ENCODE measurements at regions of chr9 and their contacts with region 1.

Region 1: GRCh38 chr9:116860509-116861120 is 173.5 kb downstream of the TRIM32 start:
- DNase-seq: peak; percentile 87
- ATAC-seq: peak; percentile 98
- H3K4me3 Mint-ChIP-seq: no peak overlapping the region
- H3K27ac Mint-ChIP-seq: 0 out of 2 replicates have a peak overlapping the region, but pooled peaks have one; percentile 47
- H3K4me1 Mint-ChIP-seq: peaks cover 16% of the 10 kb centered on the region
- H3K27me3 Mint-ChIP-seq: no peaks in the 10 kb centered on the region
- CTCF ChIP-seq: peak; percentile 78

Region 2: DNA sequence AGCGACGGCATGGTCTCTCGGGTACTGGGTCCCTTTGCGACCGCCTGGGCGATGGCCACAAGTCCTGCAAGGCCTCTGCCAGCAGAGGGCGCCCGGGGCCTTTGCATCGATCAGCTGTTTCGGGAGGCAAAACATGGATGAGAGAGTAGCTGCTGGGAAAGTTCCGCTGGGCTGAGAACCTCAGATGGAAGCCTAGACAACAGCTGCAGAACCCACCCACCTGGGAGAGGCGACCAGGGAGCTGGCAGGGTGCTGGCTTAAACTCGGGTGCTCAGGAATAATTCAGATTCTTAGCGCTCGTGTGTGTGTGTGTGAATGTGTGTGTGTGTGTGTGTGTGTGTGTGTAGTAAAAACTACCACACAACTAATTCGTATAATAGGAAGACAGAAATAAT is 123.5 kb before region 1 on chr9:
- CTCF ChIA-PET with region 1: interaction called, 272 read pairs
- POLR2A ChIA-PET with region 1: interaction called, 4 read pairs
- DNase-seq: peak; percentile 97
- ATAC-seq: peak; percentile 87
- H3K4me3 Mint-ChIP-seq: no peak overlapping the region
- H3K27ac Mint-ChIP-seq: no peak overlapping the region
- H3K4me1 Mint-ChIP-seq: peaks cover 29% of the 10 kb centered on the region
- H3K27me3 Mint-ChIP-seq: no peaks in the 10 kb centered on the region
- CTCF ChIP-seq: peak; percentile 91

Region 3: GRCh38 chr9:116800885-116801284 is 59.7 kb before region 1 on chr9:
- CTCF ChIA-PET with region 1: interaction called, 17 read pairs
- POLR2A ChIA-PET with region 1: no interaction called
- DNase-seq: no peak
- ATAC-seq: peak; percentile 91
- H3K4me3 Mint-ChIP-seq: no peak overlapping the region
- H3K27ac Mint-ChIP-seq: peak overlapping the region; percentile 3; the same call in 1 of the 2 replicates
- H3K4me1 Mint-ChIP-seq: peaks cover 22% of the 10 kb centered on the region
- H3K27me3 Mint-ChIP-seq: no peaks in the 10 kb centered on the region
- CTCF ChIP-seq: no peak

Region 4: DNA sequence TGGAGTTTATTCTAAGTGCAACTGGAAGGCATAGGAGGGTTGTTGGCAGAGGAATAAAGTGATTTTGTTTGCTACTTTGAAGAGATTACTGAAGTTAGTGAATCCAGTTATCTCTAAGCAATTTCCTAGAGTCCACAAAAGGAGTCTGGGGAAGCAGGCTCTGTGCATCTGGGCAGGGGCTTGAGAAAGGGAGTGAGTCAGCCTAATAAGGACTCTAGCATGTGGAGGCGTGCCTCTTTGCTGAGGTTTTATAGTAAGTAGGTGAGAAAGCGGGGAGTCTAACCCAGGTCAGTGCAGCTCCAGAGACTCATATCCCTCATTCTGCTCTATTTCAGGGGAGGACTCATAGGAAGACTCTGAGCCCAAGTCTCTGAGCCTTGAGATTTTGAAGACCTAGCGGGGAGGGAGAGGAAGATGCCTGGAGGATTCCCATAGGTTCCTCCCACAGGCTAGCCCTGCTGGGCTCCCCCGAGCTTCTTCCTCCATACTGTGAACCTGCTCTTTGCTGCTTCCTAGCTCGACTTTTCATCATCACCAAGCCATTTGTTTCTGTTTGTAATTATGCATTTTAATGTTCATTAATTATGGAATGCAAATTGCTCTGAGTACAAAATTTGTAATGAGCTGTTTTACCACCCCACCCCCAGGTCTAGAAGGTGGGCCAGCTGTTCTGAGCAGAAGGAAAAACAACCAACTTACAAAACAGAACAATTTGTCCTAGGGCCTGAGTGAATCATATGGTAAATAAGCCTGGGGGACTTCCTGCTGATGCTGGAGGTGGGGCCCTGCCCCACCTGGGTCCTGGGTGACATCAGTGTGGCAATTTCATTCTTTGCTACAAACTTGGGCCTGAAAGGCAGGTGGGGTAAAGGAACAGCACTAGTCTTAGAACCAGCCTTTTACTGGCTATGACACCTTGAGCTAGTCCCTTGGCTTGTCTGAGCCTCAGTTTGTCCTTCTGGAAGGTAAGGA is 23.3 kb before region 1 on chr9:
- CTCF ChIA-PET with region 1: interaction called, 67 read pairs
- POLR2A ChIA-PET with region 1: no interaction called
- DNase-seq: no peak
- ATAC-seq: peak; percentile 73
- H3K4me3 Mint-ChIP-seq: no peak overlapping the region
- H3K27ac Mint-ChIP-seq: peak overlapping the region; percentile 88
- H3K4me1 Mint-ChIP-seq: peaks cover 55% of the 10 kb centered on the region
- H3K27me3 Mint-ChIP-seq: no peaks in the 10 kb centered on the region
- CTCF ChIP-seq: no peak

Region 5: DNA sequence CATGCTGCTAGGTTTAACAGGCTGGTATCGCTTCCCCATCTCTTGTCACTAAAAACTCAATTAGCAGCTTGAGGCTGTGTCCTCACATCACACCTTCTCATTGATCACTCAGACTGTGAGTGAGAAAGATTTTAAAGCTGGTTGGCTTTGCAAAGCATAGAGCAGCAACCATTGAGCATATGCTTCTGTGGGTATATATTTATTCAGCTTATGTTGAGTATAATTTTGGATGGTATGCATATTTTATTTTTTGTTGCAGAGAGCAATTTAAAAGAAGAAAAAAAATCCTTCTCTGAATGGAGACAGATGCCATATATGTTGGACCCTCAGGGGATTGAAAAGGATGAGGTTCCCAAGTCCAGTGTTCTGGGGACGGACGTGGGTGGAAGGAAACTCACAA is 10.9 kb before region 1 on chr9:
- CTCF ChIA-PET with region 1: interaction called, 67 read pairs
- POLR2A ChIA-PET with region 1: interaction called, 3 read pairs
- DNase-seq: no peak
- ATAC-seq: no peak
- H3K4me3 Mint-ChIP-seq: no peak overlapping the region
- H3K27ac Mint-ChIP-seq: no peak overlapping the region
- H3K4me1 Mint-ChIP-seq: no peaks in the 10 kb centered on the region
- H3K27me3 Mint-ChIP-seq: no peaks in the 10 kb centered on the region; the same call in 1 of the 2 replicates
- CTCF ChIP-seq: no peak

Region 6: DNA sequence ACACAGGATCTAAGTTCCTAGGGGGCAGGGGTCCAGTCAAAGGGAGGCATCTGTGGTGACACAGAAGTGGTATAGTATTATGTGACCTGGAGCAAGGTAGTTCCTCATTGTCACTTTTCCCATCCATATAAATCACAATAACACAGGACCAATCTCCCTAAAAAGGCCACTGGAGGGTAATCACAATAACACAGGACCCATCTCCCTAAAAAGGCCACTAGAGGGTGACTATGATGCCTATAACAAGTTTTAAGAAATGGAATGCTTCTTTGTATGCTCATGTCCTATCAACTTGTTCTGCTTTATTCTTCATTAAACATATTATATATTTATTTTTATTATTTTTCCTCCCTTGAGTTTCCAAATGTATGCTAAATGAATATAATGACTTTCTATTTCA is 299.6 kb after region 1 on chr9:
- CTCF ChIA-PET with region 1: no interaction called
- POLR2A ChIA-PET with region 1: no interaction called
- DNase-seq: no peak
- ATAC-seq: peak; percentile 73
- H3K4me3 Mint-ChIP-seq: no peak overlapping the region
- H3K27ac Mint-ChIP-seq: no peak overlapping the region
- H3K4me1 Mint-ChIP-seq: no peaks in the 10 kb centered on the region
- H3K27me3 Mint-ChIP-seq: no peaks in the 10 kb centered on the region
- CTCF ChIP-seq: no peak